ENCODE measurements at regions of chr21 and their contacts with region 1.

Region 1: GRCh38 chr21:25607151-25608043 is at the start of gene MRPL39:
- DNase-seq: peak; percentile 89 to 95 (median 92)
- ATAC-seq: peak; percentile 99
- H3K4me3 ChIP-seq: peak within 1 kb of the TSS; percentile 79
- H3K27ac ChIP-seq: peak within 1 kb of the TSS; percentile 74
- H3K4me1 ChIP-seq: peaks cover 3 to 7% of the 10 kb centered on the region in 2 experiments; a peak in 2 of 5 replicates
- H3K27me3 ChIP-seq: no peaks in the 10 kb centered on the region
- CTCF ChIP-seq: peak; percentile 72 to 83 (median 82)
- EP300 ChIP-seq: peak; percentile 51; the same call in 1 of the 2 replicates
- POLR2A ChIP-seq: peak; percentile 97
- RAD21 ChIP-seq: peak in 1 of 2 experiments; percentile 38; a peak in 3 of 4 replicates
- polyA plus RNA-seq, gene MRPL39: 234 to 247 TPM

Region 2: DNA sequence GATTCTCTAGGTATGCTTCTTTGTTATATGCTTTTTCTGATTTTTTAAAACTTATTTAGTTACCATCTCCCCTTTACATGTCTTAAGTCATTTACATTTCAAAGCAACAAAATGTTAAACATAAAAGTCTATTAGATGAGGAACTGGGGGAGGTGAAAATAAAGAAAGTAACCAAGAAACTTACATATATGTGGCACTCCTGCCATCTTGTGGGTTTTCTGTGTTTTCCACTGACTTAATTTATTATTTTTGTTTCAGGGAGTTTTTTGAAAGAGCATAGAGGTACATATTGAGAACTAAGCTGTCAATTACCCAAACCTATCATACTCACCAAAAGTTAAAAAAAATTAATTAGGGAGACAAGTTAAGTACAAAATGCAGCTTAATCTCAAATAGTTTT is 1531.2 kb before region 1 on chr21:
- CTCF ChIA-PET with region 1: no interaction called
- POLR2A ChIA-PET with region 1: no interaction called
- in situ Hi-C with region 1: no loop called
- intact Hi-C with region 1: no loop called
- DNase-seq: no peak
- ATAC-seq: no peak
- H3K4me3 ChIP-seq: no peak overlapping the region
- H3K27ac ChIP-seq: no peak overlapping the region
- H3K4me1 ChIP-seq: no peaks in the 10 kb centered on the region
- H3K27me3 ChIP-seq: no peaks in the 10 kb centered on the region
- CTCF ChIP-seq: no peak
- EP300 ChIP-seq: no peak
- POLR2A ChIP-seq: no peak
- RAD21 ChIP-seq: no peak

Region 3: DNA sequence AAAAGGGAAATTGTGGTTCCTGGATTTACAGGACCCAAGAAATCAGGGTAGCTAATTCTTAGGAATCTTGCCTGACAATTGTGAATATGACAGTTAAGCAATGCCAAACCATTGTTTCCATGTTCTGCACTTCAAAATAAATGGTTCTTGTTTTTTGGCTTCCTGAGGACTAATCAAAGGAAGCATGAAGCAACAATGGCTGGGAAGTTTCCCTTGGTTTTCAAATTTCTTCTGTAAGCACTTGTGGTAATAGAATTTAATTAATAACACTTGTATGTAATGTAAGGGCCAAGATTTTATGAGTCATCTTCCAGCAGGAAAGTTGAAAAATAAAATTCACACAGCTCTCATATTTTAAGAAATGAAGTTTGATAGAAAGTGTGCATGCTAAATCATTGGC is 63.3 kb after region 1 on chr21:
- CTCF ChIA-PET with region 1: no interaction called
- POLR2A ChIA-PET with region 1: no interaction called
- in situ Hi-C with region 1: no loop called
- intact Hi-C with region 1: no loop called
- DNase-seq: no peak
- ATAC-seq: no peak
- H3K4me3 ChIP-seq: no peak overlapping the region
- H3K27ac ChIP-seq: no peak overlapping the region
- H3K4me1 ChIP-seq: no peaks in the 10 kb centered on the region
- H3K27me3 ChIP-seq: no peaks in the 10 kb centered on the region
- CTCF ChIP-seq: no peak
- EP300 ChIP-seq: no peak
- POLR2A ChIP-seq: no peak
- RAD21 ChIP-seq: no peak

Region 4: DNA sequence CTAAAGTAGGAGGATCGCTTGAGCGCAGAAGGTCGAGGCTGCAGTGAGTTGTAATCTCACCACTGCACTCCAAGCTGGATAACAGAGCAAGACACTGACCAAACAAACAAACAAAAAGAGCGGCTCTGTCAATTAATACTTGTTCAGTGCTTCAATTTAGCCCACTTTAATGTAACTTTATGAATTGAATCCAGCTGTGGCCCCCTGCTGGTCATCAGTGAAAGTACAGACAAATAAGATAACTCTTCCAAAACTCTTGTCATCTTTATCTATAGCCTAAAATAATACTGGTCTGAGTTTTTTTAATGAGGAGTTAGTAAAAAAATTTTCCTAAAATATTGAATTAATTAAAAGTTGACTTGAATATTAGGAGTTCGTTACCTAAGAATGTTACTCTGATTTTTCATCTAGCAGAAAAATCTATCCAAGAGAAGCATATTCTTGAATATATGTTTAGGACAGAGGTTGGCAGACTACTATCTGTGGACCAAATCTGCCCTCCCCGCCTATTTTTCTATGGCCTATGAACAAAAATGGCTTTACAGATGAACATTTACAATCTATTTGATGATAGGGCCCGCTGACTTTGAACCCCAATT is 101.2 kb after region 1 on chr21:
- CTCF ChIA-PET with region 1: interaction called, 5 read pairs
- POLR2A ChIA-PET with region 1: no interaction called
- in situ Hi-C with region 1: no loop called
- intact Hi-C with region 1: loop called (anchors 1 kb)
- DNase-seq: peak; percentile 49 to 60 (median 57)
- ATAC-seq: no peak
- H3K4me3 ChIP-seq: no peak overlapping the region
- H3K27ac ChIP-seq: no peak overlapping the region
- H3K4me1 ChIP-seq: no peaks in the 10 kb centered on the region; a peak in 1 of 5 replicates
- H3K27me3 ChIP-seq: no peaks in the 10 kb centered on the region
- CTCF ChIP-seq: peak; percentile 37 to 77 (median 73); a peak in 4 of 6 replicates
- EP300 ChIP-seq: no peak
- POLR2A ChIP-seq: no peak
- RAD21 ChIP-seq: peak; percentile 15 to 58; a peak in 2 of 4 replicates

Region 5: GRCh38 chr21:25734904-25735645 is 127.7 kb after region 1 on chr21 and contains the starts of genes ATP5PF and GABPA:
- CTCF ChIA-PET with region 1: no interaction called
- POLR2A ChIA-PET with region 1: interaction called, 4 read pairs
- in situ Hi-C with region 1: no loop called
- intact Hi-C with region 1: loop called (anchors 1 kb)
- DNase-seq: peak; percentile 89 to 99 (median 91)
- ATAC-seq: peak; percentile 88
- H3K4me3 ChIP-seq: peak within 1 kb of the TSS; percentile 93
- H3K27ac ChIP-seq: peak within 1 kb of the TSS; percentile 98
- H3K4me1 ChIP-seq: peaks cover 7 to 21% of the 10 kb centered on the region in 2 experiments; a peak in 4 of 5 replicates
- H3K27me3 ChIP-seq: no peaks in the 10 kb centered on the region; a peak in 1 of 5 replicates
- CTCF ChIP-seq: peak in 1 of 3 experiments; percentile 3; a peak in 2 of 6 replicates
- EP300 ChIP-seq: peak; percentile 69
- POLR2A ChIP-seq: peak; percentile 85
- RAD21 ChIP-seq: no peak
- polyA plus RNA-seq, gene ATP5PF: 2,105 to 2,488 TPM
- polyA plus RNA-seq, gene GABPA: 8.9 to 13.2 TPM

Region 6: DNA sequence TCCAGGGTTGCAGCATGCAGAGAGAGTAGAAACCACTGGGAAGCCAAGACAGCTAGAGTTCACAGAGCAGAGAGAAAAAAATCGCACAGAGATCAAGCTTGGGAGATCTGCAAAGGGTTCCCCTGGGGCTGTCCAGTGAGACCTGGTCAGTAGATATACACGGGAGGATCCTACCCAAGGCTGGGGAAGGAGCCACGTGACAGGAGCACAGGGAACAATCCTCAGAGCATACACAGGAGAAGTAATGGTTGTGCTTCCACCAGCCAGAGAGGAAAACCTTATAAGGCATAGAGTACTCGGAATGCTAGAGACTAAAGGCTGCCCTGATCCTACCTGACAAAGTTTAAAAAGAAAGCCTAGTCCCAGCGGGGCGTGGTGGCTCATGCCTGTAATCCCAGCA is 181.3 kb after region 1 on chr21:
- CTCF ChIA-PET with region 1: no interaction called
- POLR2A ChIA-PET with region 1: no interaction called
- in situ Hi-C with region 1: no loop called
- intact Hi-C with region 1: loop called (anchors 5 kb)
- DNase-seq: no peak
- ATAC-seq: peak; percentile 52
- H3K4me3 ChIP-seq: no peak overlapping the region
- H3K27ac ChIP-seq: no peak overlapping the region
- H3K4me1 ChIP-seq: no peaks in the 10 kb centered on the region; a peak in 1 of 5 replicates
- H3K27me3 ChIP-seq: peaks cover 0 to 5% of the 10 kb centered on the region in 2 experiments; a peak in 2 of 5 replicates
- CTCF ChIP-seq: no peak
- EP300 ChIP-seq: no peak
- POLR2A ChIP-seq: no peak
- RAD21 ChIP-seq: no peak

Region 7: DNA sequence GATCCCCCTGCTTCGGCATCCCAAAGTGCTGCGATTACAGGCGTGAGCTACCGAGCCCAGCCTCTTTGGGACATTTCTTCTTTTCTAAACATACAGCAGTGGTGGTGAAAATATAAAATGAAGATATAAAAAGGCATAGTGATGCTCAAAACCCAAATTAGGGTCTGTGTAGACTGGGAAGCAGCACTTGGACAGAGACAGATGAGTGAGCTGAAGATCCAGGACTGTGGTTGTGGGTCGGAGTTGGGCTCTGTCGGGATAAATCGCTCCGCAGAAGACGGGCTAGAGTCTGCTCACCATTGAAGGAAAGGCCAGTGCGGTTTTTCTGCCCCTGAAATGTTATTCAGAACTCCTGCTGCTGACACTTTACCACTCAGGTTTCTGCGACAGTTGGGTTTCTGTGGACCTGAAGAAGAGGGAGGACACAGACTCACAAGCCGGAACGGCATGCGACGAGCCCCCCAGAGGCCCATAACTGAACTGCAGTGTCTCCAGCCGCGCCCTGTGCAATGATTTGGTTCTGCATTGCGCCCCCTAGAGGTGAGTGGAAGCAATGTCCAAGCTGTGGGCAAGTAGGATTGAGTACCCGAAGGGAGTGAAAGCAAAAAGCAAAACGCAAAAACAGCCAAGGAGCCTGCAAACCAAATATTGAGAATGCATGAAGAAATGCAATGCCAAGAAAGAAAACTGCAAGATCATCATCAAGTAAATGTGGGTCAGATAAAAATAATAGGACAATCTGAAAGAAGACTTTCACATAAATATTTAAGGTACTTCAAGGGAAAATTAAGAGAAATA is 194.0 kb after region 1 on chr21:
- CTCF ChIA-PET with region 1: interaction called, 27 read pairs
- POLR2A ChIA-PET with region 1: no interaction called
- in situ Hi-C with region 1: loop called (anchors 5 kb)
- intact Hi-C with region 1: loop called (anchors 1 kb)
- DNase-seq: peak; percentile 87 to 95 (median 92)
- ATAC-seq: peak; percentile 100
- H3K4me3 ChIP-seq: no peak overlapping the region
- H3K27ac ChIP-seq: no peak overlapping the region
- H3K4me1 ChIP-seq: no peaks in the 10 kb centered on the region; a peak in 1 of 5 replicates
- H3K27me3 ChIP-seq: peaks cover 7 to 14% of the 10 kb centered on the region in 2 experiments; a peak in 3 of 5 replicates
- CTCF ChIP-seq: peak; percentile 100
- EP300 ChIP-seq: no peak
- POLR2A ChIP-seq: no peak
- RAD21 ChIP-seq: peak; percentile 44 to 85; a peak in 3 of 4 replicates

Region 8: DNA sequence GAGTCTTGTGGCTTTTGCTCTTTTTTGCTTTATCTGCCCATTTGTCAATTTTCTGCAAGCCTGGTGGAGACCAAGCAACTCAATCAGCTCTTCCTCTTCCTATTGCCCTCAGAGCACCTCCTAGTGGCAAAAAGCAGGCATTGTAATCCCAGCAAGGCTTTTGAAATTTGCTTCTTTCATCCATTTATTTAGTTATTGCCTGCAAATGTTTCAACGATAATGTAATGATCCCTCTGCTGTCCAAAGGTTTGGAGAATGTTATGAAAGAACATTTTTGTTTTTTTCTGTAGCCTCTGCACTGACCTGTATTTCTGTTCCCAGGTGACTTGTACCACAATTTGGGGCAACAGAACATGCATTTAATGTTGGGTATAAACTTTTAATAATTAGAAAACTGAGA is 255.2 kb after region 1 on chr21:
- CTCF ChIA-PET with region 1: interaction called, 20 read pairs
- POLR2A ChIA-PET with region 1: no interaction called
- in situ Hi-C with region 1: loop called (anchors 5 kb)
- intact Hi-C with region 1: loop called (anchors 1 kb)
- DNase-seq: peak; percentile 40 to 55 (median 48)
- ATAC-seq: peak; percentile 78
- H3K4me3 ChIP-seq: no peak overlapping the region
- H3K27ac ChIP-seq: no peak overlapping the region
- H3K4me1 ChIP-seq: no peaks in the 10 kb centered on the region
- H3K27me3 ChIP-seq: no peaks in the 10 kb centered on the region; a peak in 1 of 5 replicates
- CTCF ChIP-seq: peak; percentile 74 to 86 (median 83)
- EP300 ChIP-seq: no peak
- POLR2A ChIP-seq: no peak
- RAD21 ChIP-seq: peak; percentile 59 to 78

Region 9: GRCh38 chr21:26715878-26716506 is 1108.6 kb after region 1 on chr21:
- CTCF ChIA-PET with region 1: interaction called, 13 read pairs
- POLR2A ChIA-PET with region 1: no interaction called
- in situ Hi-C with region 1: loop called (anchors 10 kb)
- intact Hi-C with region 1: loop called (anchors 5 kb)
- DNase-seq: peak; percentile 19 to 45 (median 33)
- ATAC-seq: peak; percentile 64; the same call in 1 of the 3 replicates
- H3K4me3 ChIP-seq: no peak overlapping the region
- H3K27ac ChIP-seq: no peak overlapping the region
- H3K4me1 ChIP-seq: no peaks in the 10 kb centered on the region
- H3K27me3 ChIP-seq: no peaks in the 10 kb centered on the region
- CTCF ChIP-seq: peak; percentile 39 to 51 (median 50); a peak in 5 of 6 replicates
- EP300 ChIP-seq: no peak
- POLR2A ChIP-seq: no peak
- RAD21 ChIP-seq: 0 out of 4 replicates have a peak, but pooled peaks of 1 of the 2 experiments have one; percentile 25